ENCODE measurements at regions of chr12 and their contacts with region 1.

Region 1: GRCh38 chr12:99043319-99043914 is 398.3 kb downstream of the APAF1 start:
- DNase-seq: peak in 9 of 10 donors; percentile 54 to 95 (median 74)

Region 2: DNA sequence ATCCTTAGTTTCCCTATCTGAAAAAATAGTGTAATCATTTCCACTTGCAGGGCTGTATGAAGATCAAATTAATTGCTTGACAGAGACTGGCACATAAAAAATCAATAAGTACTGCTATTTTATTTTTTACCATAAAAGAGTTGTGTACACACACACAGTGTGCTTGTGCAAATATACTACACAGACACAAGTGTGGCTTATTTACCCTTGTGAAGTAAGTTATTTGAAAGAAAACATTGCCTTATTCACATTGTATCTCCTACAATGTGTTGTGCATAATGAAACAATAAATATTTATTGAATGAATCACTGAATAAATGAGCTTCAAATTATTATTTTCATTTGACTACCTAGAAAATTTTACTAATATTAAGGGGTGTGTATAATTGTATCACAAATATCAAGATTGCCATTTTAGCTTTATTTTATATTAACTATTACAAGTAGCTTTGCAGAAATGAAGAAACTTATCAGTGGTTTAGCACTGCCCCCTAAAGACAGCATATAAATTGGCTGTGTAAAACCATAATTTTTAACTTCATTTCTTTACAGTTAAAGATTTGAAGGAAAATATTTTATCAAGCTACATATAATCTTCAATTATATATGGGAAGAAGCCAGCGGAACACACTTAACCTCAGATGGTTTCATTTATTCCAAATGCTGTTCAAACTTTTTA is 615.4 kb after region 1 on chr12:
- intact Hi-C with region 1: loop called (anchors 1 kb)
- DNase-seq: no peak

Region 3: DNA sequence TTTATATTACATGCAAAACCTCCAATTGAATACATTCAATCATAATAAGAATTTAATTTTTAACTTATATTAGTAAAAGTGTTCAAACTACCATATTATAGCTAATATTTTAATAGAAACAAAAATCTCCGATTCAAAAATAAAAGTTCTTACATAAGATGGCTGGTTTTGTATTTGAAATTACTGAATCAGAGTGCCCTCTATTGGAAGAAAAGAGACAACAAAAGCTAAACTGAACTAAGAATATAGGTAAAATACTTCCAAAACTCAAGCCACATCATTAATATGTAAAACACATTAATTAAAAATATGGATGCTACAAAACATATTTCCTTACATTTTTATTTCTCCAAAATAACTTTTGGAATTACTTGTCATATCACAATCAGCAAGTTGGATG is 724.4 kb after region 1 on chr12:
- intact Hi-C with region 1: loop called (anchors 2 kb)
- DNase-seq: no peak